ENCODE measurements at regions of chr14 and their contacts with region 1.

Region 1: GRCh38 chr14:84254290-84254689 is 1275.7 kb upstream of the FLRT2 start:
- DNase-seq: peak; percentile 96
- H3K4me3 ChIP-seq: peak overlapping the region in 1 of 3 experiments; percentile 32
- H3K27ac ChIP-seq: peak overlapping the region; percentile 87
- H3K4me1 ChIP-seq: peaks cover 55% of the 10 kb centered on the region
- H3K27me3 ChIP-seq: no peaks in the 10 kb centered on the region
- CTCF ChIP-seq: no peak
- POLR2A ChIP-seq: peak; percentile 58

Region 2: DNA sequence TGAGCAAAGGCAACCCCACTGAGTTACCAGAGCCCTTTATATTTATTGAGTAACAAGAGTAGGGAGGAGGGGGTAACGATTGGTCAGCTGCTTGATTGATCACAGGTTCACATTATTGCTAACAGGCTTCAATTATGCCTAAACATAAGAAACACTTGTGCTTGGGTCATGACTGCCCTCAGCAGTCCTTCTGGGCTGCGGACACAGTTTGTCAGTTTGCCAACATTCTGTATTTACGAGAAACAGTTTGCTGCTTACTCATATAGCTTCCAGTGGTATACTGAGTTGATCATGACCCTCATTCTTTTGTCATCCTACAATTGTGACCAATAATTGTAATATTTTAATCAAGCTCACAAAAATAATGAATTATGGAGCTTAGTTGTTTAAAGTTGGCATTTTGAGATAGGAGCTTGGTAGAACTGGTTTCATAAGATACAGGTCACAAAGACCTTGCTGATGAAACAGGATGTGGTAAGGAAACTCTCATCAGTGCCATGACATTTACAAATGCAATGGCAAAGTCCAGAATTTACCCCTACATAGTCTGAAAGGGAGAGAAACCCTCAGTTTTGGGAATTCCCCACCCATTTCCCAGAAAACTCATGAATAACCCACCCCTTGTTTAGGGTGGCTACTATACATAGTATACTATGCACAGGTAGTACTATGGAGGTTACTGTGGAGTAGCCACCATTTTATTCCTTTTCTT is 145.4 kb before region 1 on chr14:
- CTCF ChIA-PET with region 1: no interaction called
- POLR2A ChIA-PET with region 1: no interaction called
- dilution Hi-C with region 1: no loop called
- intact Hi-C with region 1: loop called (anchors 2 kb)
- DNase-seq: no peak
- H3K4me3 ChIP-seq: no peak overlapping the region
- H3K27ac ChIP-seq: no peak overlapping the region
- H3K4me1 ChIP-seq: peaks cover 20% of the 10 kb centered on the region
- H3K27me3 ChIP-seq: no peaks in the 10 kb centered on the region
- CTCF ChIP-seq: no peak
- POLR2A ChIP-seq: no peak

Region 3: DNA sequence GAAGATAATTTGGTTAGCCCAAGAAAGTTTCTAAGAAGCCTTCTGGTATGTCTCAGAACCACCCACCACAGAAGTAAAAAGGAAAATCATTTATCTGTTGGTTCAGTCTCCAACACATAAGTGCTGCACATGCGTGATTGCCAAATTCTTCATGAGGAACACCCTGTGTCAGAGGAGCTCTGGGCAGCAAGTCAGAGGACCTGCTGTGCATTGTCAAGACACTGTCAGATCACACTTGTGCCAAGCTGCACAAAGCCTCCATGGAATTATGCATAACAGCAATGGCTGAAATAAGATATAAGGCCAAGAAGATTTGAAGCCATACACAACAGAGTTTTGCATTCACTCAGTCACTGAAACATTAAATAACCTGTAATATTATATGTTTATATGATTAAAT is 29.0 kb before region 1 on chr14:
- CTCF ChIA-PET with region 1: interaction called, 3 read pairs
- POLR2A ChIA-PET with region 1: no interaction called
- dilution Hi-C with region 1: no loop called
- intact Hi-C with region 1: loop called (anchors 1 kb)
- DNase-seq: no peak
- H3K4me3 ChIP-seq: no peak overlapping the region
- H3K27ac ChIP-seq: no peak overlapping the region
- H3K4me1 ChIP-seq: peaks cover 9% of the 10 kb centered on the region
- H3K27me3 ChIP-seq: no peaks in the 10 kb centered on the region
- CTCF ChIP-seq: no peak
- POLR2A ChIP-seq: no peak

Region 4: DNA sequence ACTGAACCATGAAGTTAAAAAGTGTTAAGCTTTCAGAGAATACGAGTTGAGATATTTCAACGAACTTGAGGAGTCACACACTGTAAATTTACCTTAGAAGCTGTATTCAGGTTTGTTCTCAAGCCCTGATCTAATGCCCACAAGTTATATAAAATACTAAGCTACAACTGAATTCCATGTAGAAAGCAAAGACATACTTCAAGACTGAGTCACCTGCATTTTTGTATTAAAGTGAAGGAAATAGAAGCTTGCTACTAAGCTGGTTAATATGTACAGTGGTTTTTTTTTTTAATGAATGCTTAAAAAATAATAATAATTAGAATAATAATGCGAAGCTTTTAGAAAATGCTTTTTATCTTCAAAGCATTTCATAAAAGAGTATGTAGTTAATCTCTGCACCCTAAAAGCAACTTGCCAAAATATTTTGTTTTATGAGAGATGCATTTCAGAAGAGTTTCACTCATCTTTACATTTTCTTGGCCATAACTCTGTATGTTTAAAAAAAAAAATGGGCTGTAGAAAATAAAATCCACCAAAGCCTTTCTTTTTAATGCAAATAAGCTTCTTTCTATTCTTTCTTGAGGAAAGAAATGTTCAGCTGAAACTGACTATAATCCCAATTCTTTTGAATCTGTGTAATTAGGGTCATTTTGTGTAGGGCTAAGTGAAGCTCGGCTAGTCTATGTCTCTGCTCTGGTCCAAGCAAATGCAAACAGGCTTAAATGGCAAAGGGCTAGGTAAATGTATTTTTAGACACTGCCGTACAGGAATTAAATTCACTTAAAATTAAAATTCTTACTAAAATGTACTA is 228.2 kb after region 1 on chr14:
- CTCF ChIA-PET with region 1: no interaction called
- POLR2A ChIA-PET with region 1: interaction called, 3 read pairs
- dilution Hi-C with region 1: no loop called
- intact Hi-C with region 1: loop called (anchors 2 kb)
- DNase-seq: peak; percentile 71
- H3K4me3 ChIP-seq: peak overlapping the region in 1 of 3 experiments; percentile 4
- H3K27ac ChIP-seq: peak overlapping the region; percentile 78
- H3K4me1 ChIP-seq: peaks cover 33% of the 10 kb centered on the region
- H3K27me3 ChIP-seq: no peaks in the 10 kb centered on the region
- CTCF ChIP-seq: no peak
- POLR2A ChIP-seq: no peak

Region 5: GRCh38 chr14:84961637-84962036 is 707.3 kb after region 1 on chr14:
- CTCF ChIA-PET with region 1: no interaction called
- POLR2A ChIA-PET with region 1: no interaction called
- dilution Hi-C with region 1: no loop called
- intact Hi-C with region 1: loop called (anchors 1 kb)
- DNase-seq: no peak
- H3K4me3 ChIP-seq: no peak overlapping the region
- H3K27ac ChIP-seq: no peak overlapping the region
- H3K4me1 ChIP-seq: peaks cover 35% of the 10 kb centered on the region
- H3K27me3 ChIP-seq: no peaks in the 10 kb centered on the region
- CTCF ChIP-seq: no peak
- POLR2A ChIP-seq: no peak

Region 6: GRCh38 chr14:85002847-85003246 is 748.6 kb after region 1 on chr14:
- CTCF ChIA-PET with region 1: no interaction called
- POLR2A ChIA-PET with region 1: no interaction called
- dilution Hi-C with region 1: no loop called
- intact Hi-C with region 1: no loop called
- DNase-seq: peak; percentile 54
- H3K4me3 ChIP-seq: no peak overlapping the region
- H3K27ac ChIP-seq: no peak overlapping the region
- H3K4me1 ChIP-seq: no peaks in the 10 kb centered on the region
- H3K27me3 ChIP-seq: no peaks in the 10 kb centered on the region
- CTCF ChIP-seq: no peak
- POLR2A ChIP-seq: no peak

Region 7: DNA sequence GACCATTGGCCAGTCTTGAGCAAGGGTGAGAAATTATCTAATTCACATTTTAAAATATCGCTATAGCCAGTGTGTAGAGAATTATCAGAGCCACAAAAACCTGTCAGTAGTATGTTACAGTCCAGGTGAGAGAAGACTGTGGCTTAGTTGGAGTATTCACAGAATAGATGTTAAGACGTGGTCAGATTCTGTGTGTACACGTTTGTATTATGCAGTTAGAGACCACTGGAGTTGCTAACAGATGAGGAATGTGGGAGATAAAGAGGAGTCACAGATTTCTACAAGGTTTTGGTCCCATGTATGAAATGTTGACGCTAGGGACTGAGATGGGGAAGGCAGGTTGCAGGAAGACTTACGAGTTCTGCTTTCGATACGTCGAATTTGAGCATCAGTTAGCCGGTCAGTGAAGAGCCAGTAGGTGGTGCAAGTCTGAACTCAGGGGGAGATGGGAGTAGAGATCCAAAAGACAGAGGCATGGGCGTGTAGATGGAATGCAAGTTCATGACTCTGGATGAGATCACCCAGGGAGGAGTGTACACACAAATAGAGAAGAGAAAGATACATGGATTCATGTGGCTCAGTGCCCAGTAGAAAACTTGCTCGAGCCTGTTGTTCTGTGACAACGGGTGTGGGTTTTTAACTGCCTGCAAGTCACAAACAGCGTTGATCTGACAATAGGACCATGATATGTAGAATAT is 1160.9 kb after region 1 on chr14:
- CTCF ChIA-PET with region 1: no interaction called
- POLR2A ChIA-PET with region 1: no interaction called
- dilution Hi-C with region 1: no loop called
- intact Hi-C with region 1: loop called (anchors 5 kb)
- DNase-seq: peak; percentile 67
- H3K4me3 ChIP-seq: no peak overlapping the region
- H3K27ac ChIP-seq: peak overlapping the region; percentile 79
- H3K4me1 ChIP-seq: peaks cover 38% of the 10 kb centered on the region
- H3K27me3 ChIP-seq: no peaks in the 10 kb centered on the region
- CTCF ChIP-seq: peak in 1 of 2 donors; percentile 28
- POLR2A ChIP-seq: no peak

Measured in endothelial cell of umbilical vein (primary cell).